Calu3 (cell line): ENCODE measurements at regions of chr4 and their contacts with region 1.

Region 1: DNA sequence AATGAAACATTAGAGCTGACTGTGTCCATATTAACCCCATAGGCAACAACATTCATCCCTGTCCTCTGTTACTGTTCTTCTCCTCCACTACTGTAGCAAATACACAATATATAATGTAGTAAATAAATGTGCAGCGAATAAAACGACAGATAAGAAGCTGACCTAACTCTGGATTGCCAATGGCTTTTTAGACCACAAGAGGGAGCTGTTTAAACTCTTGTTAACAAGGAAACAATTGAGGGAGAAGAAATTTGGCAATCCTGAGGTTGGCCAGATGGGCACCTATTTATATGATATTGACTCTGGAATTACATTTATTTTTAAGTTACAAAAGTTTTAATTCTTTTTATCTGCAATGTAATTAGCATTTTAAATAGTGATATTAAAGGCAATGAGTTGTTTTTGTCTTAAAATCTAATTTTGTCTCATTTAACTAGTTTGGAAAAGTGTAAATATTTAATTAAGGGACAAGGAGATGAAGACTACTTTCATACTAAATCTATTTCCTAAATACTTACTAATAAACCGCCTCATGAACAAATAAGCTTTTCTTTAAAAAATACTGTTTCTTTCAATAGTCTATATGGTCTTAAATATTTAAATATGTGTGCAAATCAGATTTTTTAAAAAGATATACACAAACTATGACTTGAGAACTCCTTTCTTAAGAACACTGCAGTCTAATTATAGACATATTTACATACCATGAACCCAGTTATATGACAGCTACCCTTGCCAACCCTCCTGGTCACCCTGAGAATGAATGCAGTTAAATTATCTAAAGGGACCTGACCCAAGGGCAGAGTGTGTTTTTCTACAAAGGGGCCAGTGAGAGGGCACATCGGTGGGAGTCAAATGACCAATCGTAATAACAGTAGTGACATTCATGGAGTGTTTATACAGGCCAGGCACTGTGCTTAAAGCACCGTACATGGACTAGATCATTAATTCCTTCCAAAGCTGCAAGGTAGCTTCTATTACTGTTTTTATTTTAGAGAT is 52.9 kb upstream of the HPF1 start:
- DNase-seq: peak; percentile 47
- H3K4me3 Mint-ChIP-seq: no peak overlapping the region
- H3K27ac Mint-ChIP-seq: no peak overlapping the region
- H3K4me1 Mint-ChIP-seq: peaks cover 8% of the 10 kb centered on the region
- H3K27me3 Mint-ChIP-seq: no peaks in the 10 kb centered on the region
- CTCF ChIP-seq: peak; percentile 38

Region 2: GRCh38 chr4:169902658-169903345 is 92.2 kb after region 1 on chr4:
- CTCF ChIA-PET with region 1: no interaction called
- intact Hi-C with region 1: loop called (anchors 10 kb)
- DNase-seq: no peak
- H3K4me3 Mint-ChIP-seq: no peak overlapping the region
- H3K27ac Mint-ChIP-seq: peak overlapping the region; percentile 45
- H3K4me1 Mint-ChIP-seq: peaks cover 33% of the 10 kb centered on the region
- H3K27me3 Mint-ChIP-seq: no peaks in the 10 kb centered on the region
- CTCF ChIP-seq: no peak

Region 3: GRCh38 chr4:169940450-169940849 is 129.8 kb after region 1 on chr4:
- CTCF ChIA-PET with region 1: no interaction called
- intact Hi-C with region 1: loop called (anchors 10 kb)
- DNase-seq: no peak
- H3K4me3 Mint-ChIP-seq: no peak overlapping the region
- H3K27ac Mint-ChIP-seq: no peak overlapping the region
- H3K4me1 Mint-ChIP-seq: peaks cover 39% of the 10 kb centered on the region
- H3K27me3 Mint-ChIP-seq: no peaks in the 10 kb centered on the region
- CTCF ChIP-seq: no peak

Region 4: GRCh38 chr4:170008371-170008770 is 197.7 kb after region 1 on chr4:
- CTCF ChIA-PET with region 1: interaction called, 13 read pairs
- intact Hi-C with region 1: loop called (anchors 2 kb)
- DNase-seq: peak; percentile 30
- H3K4me3 Mint-ChIP-seq: no peak overlapping the region
- H3K27ac Mint-ChIP-seq: no peak overlapping the region
- H3K4me1 Mint-ChIP-seq: no peaks in the 10 kb centered on the region
- H3K27me3 Mint-ChIP-seq: no peaks in the 10 kb centered on the region
- CTCF ChIP-seq: no peak

Region 5: DNA sequence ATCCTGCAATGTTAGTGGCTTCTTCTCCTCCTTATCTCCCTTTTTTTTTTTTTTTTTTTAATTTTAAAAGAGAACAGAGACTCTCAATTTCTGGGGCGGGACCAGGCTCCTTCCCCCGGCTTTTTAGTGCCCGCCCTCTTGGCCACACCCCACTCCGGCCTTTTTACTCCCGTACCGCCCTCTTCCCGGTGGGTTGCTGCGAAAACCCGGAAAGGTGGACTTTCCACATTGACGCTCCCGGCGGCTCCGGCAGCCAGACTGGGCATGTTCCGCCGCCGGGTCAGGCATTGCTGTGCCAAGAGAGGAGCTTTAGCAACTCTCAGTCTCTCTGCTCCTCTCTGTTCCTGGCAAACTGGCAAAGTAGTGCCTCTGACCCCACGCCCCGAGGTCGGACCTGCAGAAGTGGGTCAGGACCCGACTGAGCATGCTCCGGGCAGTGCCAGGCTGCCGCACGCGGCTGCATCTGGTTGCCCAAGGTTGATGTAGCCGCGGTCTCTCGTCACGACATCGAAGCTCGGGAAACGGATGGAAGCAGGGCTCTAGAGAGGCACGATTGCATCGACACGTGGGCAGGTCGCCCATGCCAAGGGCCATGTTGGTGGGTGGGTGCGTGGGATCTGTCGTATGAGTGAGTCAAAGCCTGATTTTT is 216.7 kb after region 1 on chr4:
- CTCF ChIA-PET with region 1: no interaction called
- intact Hi-C with region 1: loop called (anchors 5 kb)
- DNase-seq: peak; percentile 92
- H3K4me3 Mint-ChIP-seq: peak overlapping the region; percentile 82
- H3K27ac Mint-ChIP-seq: peak overlapping the region; percentile 76
- H3K4me1 Mint-ChIP-seq: peaks cover 10% of the 10 kb centered on the region
- H3K27me3 Mint-ChIP-seq: peaks cover 13% of the 10 kb centered on the region
- CTCF ChIP-seq: no peak

Region 6: DNA sequence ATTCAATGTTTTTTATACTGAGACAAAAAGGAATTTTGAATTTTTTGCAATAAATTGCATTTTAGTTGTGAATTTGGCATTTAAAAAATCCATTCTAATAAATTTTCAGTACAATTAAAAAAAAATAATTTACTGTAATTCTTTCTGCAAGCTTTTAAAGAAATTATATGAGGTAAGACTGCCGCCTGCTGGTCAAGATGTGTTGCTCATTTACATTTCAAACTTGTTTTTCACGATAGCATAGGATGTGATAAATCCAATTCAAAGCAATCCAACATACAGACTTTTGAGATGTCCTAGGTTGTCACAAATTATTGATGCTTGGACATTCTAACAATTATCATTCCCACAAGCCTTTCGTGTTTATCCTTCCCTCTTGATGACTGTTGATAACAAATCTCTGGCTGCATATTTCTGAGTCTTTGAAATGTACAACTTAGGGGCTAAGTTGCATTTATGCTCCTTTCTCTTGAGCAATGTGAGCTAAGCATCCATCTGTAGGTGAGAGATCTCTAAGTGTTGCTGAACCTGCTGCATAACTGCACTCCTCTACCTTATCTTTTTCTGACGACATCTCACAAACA is 237.2 kb after region 1 on chr4:
- CTCF ChIA-PET with region 1: interaction called, 5 read pairs
- intact Hi-C with region 1: loop called (anchors 1 kb)
- DNase-seq: peak; percentile 44
- H3K4me3 Mint-ChIP-seq: no peak overlapping the region
- H3K27ac Mint-ChIP-seq: no peak overlapping the region
- H3K4me1 Mint-ChIP-seq: no peaks in the 10 kb centered on the region
- H3K27me3 Mint-ChIP-seq: no peaks in the 10 kb centered on the region
- CTCF ChIP-seq: no peak